Activated CD4-positive, alpha-beta memory T cell treated with anti-CD3 and anti-CD28 coated beads, Interleukin-2, amount 10 ng/mL, durations not matched to agents 7 days and 5 days (primary cell): ENCODE measurements at regions of chr12 and their contacts with region 1.

Region 1: GRCh38 chr12:93397412-93397811 is 19.7 kb downstream of the NUDT4 start:
- DNase-seq: no peak
- H3K4me3 Mint-ChIP-seq: no peak overlapping the region
- H3K27ac Mint-ChIP-seq: no peak overlapping the region
- H3K4me1 Mint-ChIP-seq: peaks cover 1% of the 10 kb centered on the region
- H3K27me3 Mint-ChIP-seq: no peaks in the 10 kb centered on the region

Region 2: DNA sequence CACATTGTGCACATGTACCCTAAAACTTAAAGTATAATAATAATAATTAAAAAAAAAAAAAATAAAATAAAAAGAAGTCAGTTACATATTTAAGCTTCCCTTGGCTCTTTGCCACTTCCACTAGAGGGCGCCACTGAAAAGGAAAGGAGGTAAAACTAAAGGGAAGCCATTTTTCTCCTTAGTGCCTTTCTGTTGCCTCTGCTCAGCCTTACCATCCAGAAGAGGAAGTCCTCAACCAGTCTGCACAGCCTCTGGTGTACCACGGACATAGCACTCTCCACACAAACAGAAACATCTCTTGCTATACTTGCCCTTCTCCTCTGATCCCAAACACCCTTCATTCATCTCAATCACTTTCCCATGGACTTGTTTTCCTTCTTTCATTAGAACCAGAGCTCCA is 299.3 kb before region 1 on chr12:
- CTCF ChIA-PET with region 1: interaction called, 17 read pairs
- POLR2A ChIA-PET with region 1: no interaction called
- DNase-seq: peak; percentile 63
- H3K4me3 Mint-ChIP-seq: no peak overlapping the region
- H3K27ac Mint-ChIP-seq: no peak overlapping the region
- H3K4me1 Mint-ChIP-seq: peaks cover 11% of the 10 kb centered on the region
- H3K27me3 Mint-ChIP-seq: no peaks in the 10 kb centered on the region

Region 3: GRCh38 chr12:93378373-93379325 is 18.8 kb before region 1 on chr12:
- CTCF ChIA-PET with region 1: interaction called, 18 read pairs
- POLR2A ChIA-PET with region 1: interaction called, 3 read pairs
- DNase-seq: peak; percentile 68
- H3K4me3 Mint-ChIP-seq: peak overlapping the region; percentile 100
- H3K27ac Mint-ChIP-seq: peak overlapping the region; percentile 100
- H3K4me1 Mint-ChIP-seq: peaks cover 34% of the 10 kb centered on the region
- H3K27me3 Mint-ChIP-seq: peaks cover 2% of the 10 kb centered on the region

Region 4: GRCh38 chr12:93766796-93767523 is 369.5 kb after region 1 on chr12:
- CTCF ChIA-PET with region 1: no interaction called
- POLR2A ChIA-PET with region 1: no interaction called
- DNase-seq: peak; percentile 57
- H3K4me3 Mint-ChIP-seq: peak overlapping the region; percentile 5
- H3K27ac Mint-ChIP-seq: peak overlapping the region; percentile 75
- H3K4me1 Mint-ChIP-seq: peaks cover 42% of the 10 kb centered on the region
- H3K27me3 Mint-ChIP-seq: no peaks in the 10 kb centered on the region